ENCODE measurements at regions of chr1 and their contacts with region 1.

Region 1: GRCh38 chr1:33599516-33600115 is 127.2 kb downstream of the ZSCAN20 start:
- DNase-seq: no peak
- H3K4me3 ChIP-seq: no peak overlapping the region
- H3K27ac ChIP-seq: no peak overlapping the region
- H3K4me1 ChIP-seq: no peaks in the 10 kb centered on the region
- H3K27me3 ChIP-seq: peaks cover 0 to 22% (median 0%) of the 10 kb centered on the region in 4 donors
- CTCF ChIP-seq: no peak
- POLR2A ChIP-seq: no peak

Region 2: GRCh38 chr1:33094971-33095604 is 504.5 kb before region 1 on chr1:
- intact Hi-C with region 1: loop called (anchors 10 kb)
- DNase-seq: no peak
- H3K4me3 ChIP-seq: no peak overlapping the region
- H3K27ac ChIP-seq: no peak overlapping the region
- H3K4me1 ChIP-seq: peaks cover 0 to 12% (median 0%) of the 10 kb centered on the region in 3 donors
- H3K27me3 ChIP-seq: no peaks in the 10 kb centered on the region
- CTCF ChIP-seq: peak; percentile 80 to 99 (median 94)
- POLR2A ChIP-seq: no peak

Region 3: GRCh38 chr1:33494929-33495328 is 104.7 kb before region 1 on chr1:
- intact Hi-C with region 1: loop called (anchors 10 kb)
- DNase-seq: no peak
- H3K4me3 ChIP-seq: no peak overlapping the region
- H3K27ac ChIP-seq: no peak overlapping the region
- H3K4me1 ChIP-seq: no peaks in the 10 kb centered on the region
- H3K27me3 ChIP-seq: no peaks in the 10 kb centered on the region
- CTCF ChIP-seq: no peak
- POLR2A ChIP-seq: no peak

Measured in esophagus squamous epithelium (tissue), 5 donors.